ENCODE measurements at regions of chr19 and their contacts with region 1.

Region 1: GRCh38 chr19:8355631-8356402 is 8.1 kb upstream of the ANGPTL4 start:
- DNase-seq: peak in 1 of 4 donors; percentile 70
- ATAC-seq: peak; percentile 82
- H3K4me3 ChIP-seq: no peak overlapping the region
- H3K27ac ChIP-seq: peak overlapping the region in 1 of 2 donors; percentile 26
- H3K4me1 ChIP-seq: peaks cover 6 to 52% of the 10 kb centered on the region in 2 donors
- H3K27me3 ChIP-seq: peaks cover 0 to 10% of the 10 kb centered on the region in 2 donors
- CTCF ChIP-seq: no peak

Region 2: DNA sequence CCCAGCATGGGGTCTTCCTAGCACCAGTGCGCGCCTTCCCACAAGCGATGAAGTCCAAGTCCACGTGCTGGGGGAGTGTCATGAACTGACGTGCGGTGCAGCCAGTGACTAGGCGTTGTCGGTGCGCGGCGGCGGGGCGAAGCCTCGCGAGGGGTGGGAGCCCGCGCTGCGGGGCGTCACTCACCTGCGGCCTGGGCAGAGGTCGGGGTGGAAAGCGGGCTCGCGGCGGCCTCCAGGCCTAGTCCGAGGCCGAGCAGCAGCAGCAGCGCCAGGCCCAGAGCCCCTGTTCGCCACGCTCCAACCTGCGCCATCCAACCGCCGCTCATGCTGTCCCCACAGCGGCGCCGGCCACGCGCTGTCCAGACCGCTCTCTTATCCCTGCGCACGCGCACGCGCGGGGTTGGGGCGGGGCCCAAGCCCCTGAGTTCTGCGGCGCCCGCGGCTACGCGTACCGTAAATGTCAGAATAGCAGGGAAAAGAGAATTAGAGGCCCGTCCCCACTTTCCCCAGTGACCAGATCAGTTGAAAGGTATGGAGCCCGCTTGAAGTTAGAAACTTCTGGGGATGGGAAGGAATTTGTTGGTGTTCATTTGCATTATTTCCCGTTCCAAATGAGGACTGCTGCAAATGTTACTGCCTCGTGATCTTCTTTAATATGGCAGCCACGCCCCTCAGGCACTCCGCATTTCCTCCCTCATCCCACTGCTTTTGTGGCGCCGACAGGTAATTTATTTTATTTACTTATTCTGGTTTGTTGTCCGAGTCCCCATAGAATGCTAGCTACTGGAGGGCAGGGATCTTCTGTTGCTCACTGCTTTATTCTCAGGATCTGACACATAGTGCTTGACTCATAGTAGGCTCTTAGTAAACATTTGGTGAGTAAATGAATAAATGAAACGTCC is 47.6 kb before region 1 on chr19 and contains the start of gene CD320:
- intact Hi-C with region 1: no loop called
- DNase-seq: peak; percentile 89 to 97 (median 92)
- ATAC-seq: peak; percentile 98
- H3K4me3 ChIP-seq: peak within 1 kb of the TSS; percentile 46 to 53
- H3K27ac ChIP-seq: peak within 1 kb of the TSS; percentile 13 to 74
- H3K4me1 ChIP-seq: peaks cover 13 to 56% of the 10 kb centered on the region in 2 donors
- H3K27me3 ChIP-seq: peaks cover 0 to 5% of the 10 kb centered on the region in 2 donors
- CTCF ChIP-seq: no peak
- polyA plus RNA-seq, gene CD320: 30.4 to 42.5 (median 34.0) TPM

Region 3: GRCh38 chr19:8404391-8405151 is 48.8 kb after region 1 on chr19:
- intact Hi-C with region 1: loop called in 1 of 2 experiments (anchors 5 kb)
- DNase-seq: no peak
- ATAC-seq: no peak
- H3K4me3 ChIP-seq: no peak overlapping the region
- H3K27ac ChIP-seq: no peak overlapping the region
- H3K4me1 ChIP-seq: no peaks in the 10 kb centered on the region
- H3K27me3 ChIP-seq: no peaks in the 10 kb centered on the region
- CTCF ChIP-seq: no peak

Region 4: DNA sequence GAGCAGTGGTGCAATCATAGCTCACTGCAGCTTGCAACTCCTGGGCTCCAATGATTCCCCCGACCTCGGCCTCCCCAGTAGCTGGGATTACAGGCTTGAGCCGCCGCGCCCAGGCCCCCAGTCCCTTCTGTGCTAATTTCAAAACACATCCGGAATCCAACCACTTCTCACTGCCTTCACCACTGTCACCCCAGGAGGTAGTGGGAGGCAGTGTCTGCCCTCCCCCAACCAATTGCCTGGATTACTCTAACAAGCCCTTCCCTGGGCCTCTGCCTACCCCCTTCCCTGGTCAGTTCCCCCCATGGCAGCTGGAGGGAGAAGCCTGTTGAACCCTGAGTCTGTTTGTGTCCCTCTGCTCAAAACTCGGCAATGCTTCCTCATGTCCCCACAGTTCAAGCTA is 144.3 kb after region 1 on chr19:
- intact Hi-C with region 1: loop called in 1 of 2 experiments (anchors 5 kb)
- DNase-seq: peak in 1 of 4 donors; percentile 88
- ATAC-seq: peak; percentile 44
- H3K4me3 ChIP-seq: peak overlapping the region in 1 of 2 donors; percentile 44
- H3K27ac ChIP-seq: peak overlapping the region in 1 of 2 donors; percentile 85
- H3K4me1 ChIP-seq: peaks cover 0 to 84% of the 10 kb centered on the region in 2 donors
- H3K27me3 ChIP-seq: no peaks in the 10 kb centered on the region
- CTCF ChIP-seq: no peak